Common myeloid progenitor, CD34-positive (primary cell): ENCODE measurements at regions of chr15 and their contacts with region 1.

Region 1: GRCh38 chr15:90648137-90649070 is 68.7 kb upstream of the BLM start:
- DNase-seq: peak; percentile 77 to 86 (median 81)
- H3K4me3 ChIP-seq: peak overlapping the region in 2 of 7 experiments; percentile 13 to 48
- H3K27ac ChIP-seq: peak overlapping the region in 1 of 2 experiments; percentile 69
- H3K4me1 ChIP-seq: peaks cover 14 to 36% (median 30%) of the 10 kb centered on the region in 4 experiments
- H3K27me3 ChIP-seq: no peaks in the 10 kb centered on the region

Region 2: GRCh38 chr15:90691982-90692773 is 43.8 kb after region 1 on chr15:
- CTCF ChIA-PET with region 1: interaction called, 10 read pairs
- POLR2A ChIA-PET with region 1: interaction called, 3 read pairs
- DNase-seq: no peak
- H3K4me3 ChIP-seq: no peak overlapping the region
- H3K27ac ChIP-seq: no peak overlapping the region
- H3K4me1 ChIP-seq: peaks cover 3 to 33% (median 17%) of the 10 kb centered on the region in 4 experiments
- H3K27me3 ChIP-seq: no peaks in the 10 kb centered on the region

Region 3: GRCh38 chr15:91022075-91022835 is 373.9 kb after region 1 on chr15 and contains the start of gene VPS33B:
- CTCF ChIA-PET with region 1: no interaction called
- POLR2A ChIA-PET with region 1: no interaction called
- DNase-seq: peak; percentile 91 to 94 (median 92)
- H3K4me3 ChIP-seq: peak within 1 kb of the TSS; percentile 82 to 99 (median 95)
- H3K27ac ChIP-seq: peak within 1 kb of the TSS; percentile 53 to 86
- H3K4me1 ChIP-seq: peaks cover 9 to 24% (median 16%) of the 10 kb centered on the region in 4 experiments
- H3K27me3 ChIP-seq: no peaks in the 10 kb centered on the region